ENCODE measurements at regions of chr15 and their contacts with region 1.

Region 1: DNA sequence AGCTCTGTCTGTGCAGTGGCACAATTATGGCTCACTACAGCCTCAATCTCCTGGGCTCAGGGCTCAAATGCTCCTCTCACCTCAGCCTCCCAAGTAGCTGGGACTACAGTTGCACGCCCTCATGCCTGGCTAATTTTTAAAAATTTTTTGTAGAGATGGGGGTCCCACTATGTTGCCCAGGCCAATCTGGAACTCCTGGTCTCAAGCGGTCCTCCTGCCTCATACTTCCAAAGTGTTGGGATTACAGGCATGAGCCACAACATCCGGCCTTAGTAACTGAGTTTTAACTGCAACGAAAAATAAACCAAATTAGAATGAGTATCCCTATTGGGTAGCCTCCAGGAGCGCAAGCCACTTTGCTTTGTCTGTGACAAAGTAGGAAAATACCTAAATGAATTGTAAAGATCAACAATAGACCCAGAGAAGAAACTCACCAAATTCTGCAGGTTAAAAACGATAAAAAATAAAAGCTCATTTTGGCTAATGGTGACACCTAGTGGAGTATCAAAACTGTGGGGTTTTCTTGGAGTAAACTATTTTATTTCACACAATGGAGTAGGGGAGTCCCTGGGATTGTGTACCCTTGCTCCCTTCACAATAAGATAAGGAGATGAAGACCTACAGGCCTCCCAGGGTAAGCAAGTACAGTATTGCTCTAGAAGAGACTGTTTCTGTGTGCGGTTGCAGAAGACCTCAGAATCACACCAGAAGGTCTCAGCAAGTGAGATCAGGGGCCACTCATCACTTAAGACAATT is 21.0 kb upstream of the CA12 start:
- DNase-seq: no peak
- H3K4me3 ChIP-seq: no peak overlapping the region
- H3K27me3 ChIP-seq: no peaks in the 10 kb centered on the region
- CTCF ChIP-seq: peak; percentile 53

Region 2: DNA sequence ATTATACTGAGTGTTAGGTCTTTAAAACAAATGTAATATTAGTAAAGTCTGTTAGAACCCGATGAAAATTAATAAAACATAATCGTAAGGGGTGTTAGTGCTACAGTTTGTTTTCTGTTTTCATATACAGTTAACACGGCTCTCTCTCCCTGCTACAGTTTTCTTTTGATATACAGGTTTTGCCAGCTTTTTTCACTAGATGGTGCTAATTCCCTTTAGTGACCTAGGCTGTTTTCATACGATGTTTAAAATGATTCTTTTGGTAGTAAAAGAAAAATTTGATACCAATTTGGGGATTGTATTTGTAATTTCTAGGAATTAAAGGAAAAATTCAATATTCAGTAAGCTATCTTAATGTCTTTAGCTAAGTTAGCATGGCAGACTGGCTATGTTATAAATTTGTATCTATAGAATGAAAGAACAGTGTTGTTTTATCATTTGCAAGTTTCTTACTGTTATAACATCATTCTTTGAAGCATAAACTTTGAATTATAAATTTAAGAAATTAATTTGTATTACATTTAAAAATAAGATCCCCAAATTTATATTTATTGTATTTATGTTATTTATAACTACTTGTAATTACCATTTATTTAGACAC is 113.8 kb before region 1 on chr15:
- CTCF ChIA-PET with region 1: interaction called, 69 read pairs
- POLR2A ChIA-PET with region 1: no interaction called
- DNase-seq: peak; percentile 15
- H3K4me3 ChIP-seq: no peak overlapping the region
- H3K27me3 ChIP-seq: no peaks in the 10 kb centered on the region
- CTCF ChIP-seq: peak; percentile 66

Region 3: DNA sequence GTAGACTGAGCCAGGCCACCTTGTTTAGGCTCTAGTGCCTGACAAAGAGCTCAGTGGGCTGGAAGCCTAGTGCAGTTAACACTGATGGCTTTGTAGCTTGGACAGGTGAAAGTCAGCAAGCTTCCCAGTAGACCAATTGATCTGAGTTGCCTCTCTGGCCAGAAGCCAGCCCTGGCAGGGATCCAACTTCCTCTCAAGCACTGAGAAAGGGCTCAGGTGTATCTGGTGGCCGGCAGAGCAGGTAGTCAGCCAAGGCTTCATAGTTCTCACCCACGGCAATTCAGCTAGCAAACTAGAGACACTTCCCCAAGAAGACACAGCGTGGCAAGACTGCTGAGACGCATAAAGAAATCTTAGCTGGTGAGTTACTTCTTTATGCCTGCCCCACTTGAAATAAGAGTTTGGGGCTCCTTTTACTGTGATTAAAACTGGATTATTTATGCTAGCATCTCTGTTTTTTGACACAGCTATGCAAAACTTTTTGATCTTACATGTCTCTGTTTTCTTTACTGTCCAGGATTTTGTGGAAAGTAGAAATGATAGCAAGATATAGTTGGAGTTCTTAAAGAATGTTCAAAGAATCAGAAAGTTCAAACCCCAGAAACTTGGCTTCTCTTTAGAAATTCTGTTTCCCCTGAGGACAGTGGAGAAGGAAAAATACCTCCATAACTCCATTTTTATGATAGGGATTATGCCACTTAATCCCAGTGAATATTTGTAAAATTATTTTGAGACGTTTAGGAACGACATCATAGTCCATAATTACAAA is 12.6 kb before region 1 on chr15:
- CTCF ChIA-PET with region 1: interaction called, 17 read pairs
- POLR2A ChIA-PET with region 1: no interaction called
- DNase-seq: no peak
- H3K4me3 ChIP-seq: no peak overlapping the region
- H3K27me3 ChIP-seq: no peaks in the 10 kb centered on the region
- CTCF ChIP-seq: no peak

Region 4: DNA sequence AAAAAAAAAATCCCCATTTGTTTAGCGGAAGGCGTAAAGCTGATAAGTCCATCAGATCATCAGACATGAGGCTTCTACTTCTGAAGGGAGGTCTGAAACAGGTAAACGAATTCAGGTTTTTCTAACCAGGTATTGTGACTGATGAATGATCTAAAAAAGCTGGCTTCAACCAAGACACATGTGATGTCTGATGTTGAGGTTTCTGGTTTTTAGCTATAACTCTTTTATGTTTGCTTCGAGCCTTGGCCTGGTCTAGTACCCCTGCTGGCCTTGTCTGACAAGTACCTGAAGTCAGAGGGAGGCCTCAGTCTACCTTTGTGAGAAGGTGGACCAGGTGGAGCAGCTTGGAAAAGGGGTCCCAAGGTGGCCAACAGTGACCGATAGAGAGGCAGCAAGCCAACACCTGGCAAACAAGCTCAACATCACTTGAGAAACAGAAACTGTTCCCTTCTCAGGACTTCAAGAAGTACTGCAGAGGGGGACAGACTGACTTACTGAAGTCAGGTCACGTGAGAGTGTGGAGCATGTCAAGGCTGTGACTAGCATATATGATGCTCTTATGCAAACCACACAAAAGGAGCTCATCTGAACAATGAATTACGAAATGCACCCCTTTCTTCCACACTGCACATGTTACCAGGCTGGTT is 11.9 kb after region 1 on chr15:
- CTCF ChIA-PET with region 1: interaction called, 11 read pairs
- POLR2A ChIA-PET with region 1: no interaction called
- DNase-seq: no peak
- H3K4me3 ChIP-seq: no peak overlapping the region
- H3K27me3 ChIP-seq: peaks cover 2% of the 10 kb centered on the region; the same call in 1 of the 2 replicates
- CTCF ChIP-seq: no peak

Region 5: DNA sequence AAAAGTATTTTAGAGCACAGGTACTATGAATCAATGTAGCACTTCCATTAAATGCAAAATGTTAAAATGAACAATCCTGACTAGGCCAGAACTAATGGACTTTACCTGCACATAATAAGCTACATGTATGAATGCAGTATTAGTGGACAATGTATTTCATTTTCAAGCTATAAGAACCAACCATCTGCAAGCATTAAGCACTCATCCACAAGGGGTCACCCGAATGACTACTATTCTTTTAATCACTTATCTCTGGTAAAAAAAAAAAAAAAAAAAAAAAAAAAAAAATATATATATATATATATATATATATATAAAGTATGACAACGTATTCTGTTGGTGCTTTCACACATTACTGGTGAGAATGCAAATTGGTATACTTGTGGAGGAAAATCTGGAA is 423.9 kb after region 1 on chr15:
- CTCF ChIA-PET with region 1: no interaction called
- POLR2A ChIA-PET with region 1: no interaction called
- DNase-seq: no peak
- H3K4me3 ChIP-seq: no peak overlapping the region
- H3K27me3 ChIP-seq: no peaks in the 10 kb centered on the region
- CTCF ChIP-seq: peak; percentile 19; the same call in 1 of the 2 replicates